ENCODE measurements at regions of chr13 and their contacts with region 1.

Region 1: GRCh38 chr13:58043971-58044370 is 412.4 kb downstream of the PCDH17 start:
- DNase-seq: no peak
- H3K4me3 Mint-ChIP-seq: no peak overlapping the region
- H3K27ac Mint-ChIP-seq: no peak overlapping the region
- H3K4me1 Mint-ChIP-seq: no peaks in the 10 kb centered on the region
- H3K27me3 Mint-ChIP-seq: no peaks in the 10 kb centered on the region

Region 2: GRCh38 chr13:57857945-57858344 is 186.0 kb before region 1 on chr13:
- intact Hi-C with region 1: no loop called
- DNase-seq: no peak
- H3K4me3 Mint-ChIP-seq: no peak overlapping the region
- H3K27ac Mint-ChIP-seq: no peak overlapping the region
- H3K4me1 Mint-ChIP-seq: no peaks in the 10 kb centered on the region
- H3K27me3 Mint-ChIP-seq: no peaks in the 10 kb centered on the region

Region 3: GRCh38 chr13:58004751-58005150 is 39.2 kb before region 1 on chr13:
- intact Hi-C with region 1: loop called (anchors 1 kb)
- DNase-seq: no peak
- H3K4me3 Mint-ChIP-seq: no peak overlapping the region
- H3K27ac Mint-ChIP-seq: no peak overlapping the region
- H3K4me1 Mint-ChIP-seq: no peaks in the 10 kb centered on the region
- H3K27me3 Mint-ChIP-seq: no peaks in the 10 kb centered on the region